ENCODE measurements at regions of chr20 and their contacts with region 1.

Region 1: GRCh38 chr20:4082406-4083097 is 67.2 kb upstream of the RNF24 start:
- DNase-seq: peak; percentile 50
- H3K4me3 Mint-ChIP-seq: peak overlapping the region; percentile 78
- H3K27ac Mint-ChIP-seq: peak overlapping the region; percentile 92
- H3K4me1 Mint-ChIP-seq: peaks cover 56% of the 10 kb centered on the region
- H3K27me3 Mint-ChIP-seq: peaks cover 2% of the 10 kb centered on the region

Region 2: GRCh38 chr20:3753098-3753980 is 329.2 kb before region 1 on chr20:
- intact Hi-C with region 1: loop called (anchors 1 kb)
- DNase-seq: peak; percentile 51
- H3K4me3 Mint-ChIP-seq: no peak overlapping the region
- H3K27ac Mint-ChIP-seq: no peak overlapping the region
- H3K4me1 Mint-ChIP-seq: peaks cover 7% of the 10 kb centered on the region
- H3K27me3 Mint-ChIP-seq: no peaks in the 10 kb centered on the region

Region 3: GRCh38 chr20:3888622-3889488 is 193.7 kb before region 1 on chr20 and contains the start of gene PANK2:
- intact Hi-C with region 1: loop called (anchors 1 kb)
- DNase-seq: peak; percentile 98
- H3K4me3 Mint-ChIP-seq: peak within 1 kb of the TSS; percentile 100
- H3K27ac Mint-ChIP-seq: peak within 1 kb of the TSS; percentile 98
- H3K4me1 Mint-ChIP-seq: peaks cover 44% of the 10 kb centered on the region
- H3K27me3 Mint-ChIP-seq: no peaks in the 10 kb centered on the region
- total RNA-seq, gene PANK2: 51.4 and 54.6 TPM in 2 replicates

Region 4: DNA sequence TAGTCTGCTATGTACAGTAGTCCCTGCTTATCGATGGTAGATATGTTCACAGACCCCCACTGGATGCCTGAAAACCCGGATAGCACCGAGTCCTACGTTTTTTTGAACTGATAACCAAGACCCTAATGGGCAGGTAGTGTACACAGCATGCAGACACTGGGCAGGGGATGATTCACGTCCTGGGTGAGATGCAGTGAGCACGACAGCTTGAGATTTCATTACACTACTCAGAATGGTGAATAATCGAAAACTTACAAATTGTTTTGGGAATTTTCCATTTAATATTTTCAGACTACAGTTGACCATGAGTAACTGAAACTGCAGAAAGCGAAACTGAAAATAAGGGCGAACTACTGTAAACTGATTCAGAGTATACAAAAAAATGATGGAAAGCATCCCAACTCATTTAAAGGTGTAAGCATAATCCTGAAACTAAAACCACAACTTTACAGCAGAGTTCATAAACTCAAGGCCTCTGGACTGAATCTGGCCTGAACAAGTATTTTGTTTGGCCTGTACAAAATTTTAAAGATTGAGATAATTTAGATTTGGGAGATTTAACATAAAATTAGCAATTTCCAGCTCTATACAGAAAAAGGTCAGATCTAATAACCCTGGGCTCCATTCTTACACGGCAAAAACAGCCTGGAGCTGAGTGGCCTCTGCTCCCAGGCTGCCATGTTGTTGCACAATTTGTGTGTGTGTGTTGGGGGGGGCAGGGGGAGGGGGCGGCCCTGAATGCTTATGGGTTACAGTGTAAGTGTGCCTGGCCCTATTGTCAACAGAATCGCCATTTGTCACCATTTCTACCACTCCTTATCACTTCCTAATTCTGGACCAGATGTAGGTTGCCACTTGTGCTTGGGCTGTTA is 102.1 kb before region 1 on chr20:
- intact Hi-C with region 1: loop called (anchors 1 kb)
- DNase-seq: no peak
- H3K4me3 Mint-ChIP-seq: peak overlapping the region; percentile 78
- H3K27ac Mint-ChIP-seq: peak overlapping the region; percentile 91
- H3K4me1 Mint-ChIP-seq: peaks cover 22% of the 10 kb centered on the region
- H3K27me3 Mint-ChIP-seq: no peaks in the 10 kb centered on the region

Region 5: GRCh38 chr20:4014031-4014474 is 68.5 kb before region 1 on chr20:
- intact Hi-C with region 1: loop called (anchors 1 kb)
- DNase-seq: no peak
- H3K4me3 Mint-ChIP-seq: peak overlapping the region; percentile 87
- H3K27ac Mint-ChIP-seq: peak overlapping the region; percentile 78
- H3K4me1 Mint-ChIP-seq: peaks cover 57% of the 10 kb centered on the region
- H3K27me3 Mint-ChIP-seq: peaks cover 4% of the 10 kb centered on the region

Region 6: DNA sequence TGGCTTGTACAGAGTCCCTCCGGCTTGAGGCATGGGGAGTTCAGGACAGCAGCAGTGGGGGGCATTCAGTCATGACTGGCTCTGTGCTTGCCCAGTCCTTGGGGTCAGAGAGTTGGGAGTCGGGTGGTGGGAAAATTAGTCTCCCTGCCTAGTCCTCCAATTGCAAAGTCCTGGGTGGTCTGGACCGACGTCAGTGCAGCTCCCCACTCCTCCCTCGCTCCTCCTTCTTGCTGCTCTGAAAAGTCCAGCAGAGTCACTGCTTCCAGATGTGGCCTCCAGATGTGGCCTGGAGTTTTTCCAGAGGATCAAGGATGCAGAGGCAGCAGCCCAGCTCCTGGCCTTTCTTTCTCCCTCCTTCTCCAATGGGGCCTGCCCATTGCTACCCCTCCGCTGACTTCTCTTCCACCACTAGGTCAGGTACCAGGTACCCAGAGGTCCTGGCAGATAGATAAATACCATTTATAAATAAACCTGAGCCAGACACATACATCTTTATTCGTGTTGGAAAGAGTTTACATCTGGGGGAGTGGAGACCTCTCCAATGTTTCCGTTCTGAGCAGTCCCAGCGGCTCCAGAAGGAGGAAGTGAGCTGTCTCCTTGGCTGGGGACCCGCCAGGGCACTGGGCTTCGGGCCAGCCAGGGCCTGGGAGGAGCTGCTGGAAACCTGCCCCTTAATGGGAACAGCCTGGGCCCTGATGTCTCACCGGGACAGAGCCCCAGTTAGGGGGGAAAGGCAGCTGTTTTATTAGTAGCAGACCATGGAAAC is 18.2 kb before region 1 on chr20:
- intact Hi-C with region 1: no loop called
- DNase-seq: no peak
- H3K4me3 Mint-ChIP-seq: no peak overlapping the region
- H3K27ac Mint-ChIP-seq: no peak overlapping the region
- H3K4me1 Mint-ChIP-seq: peaks cover 62% of the 10 kb centered on the region
- H3K27me3 Mint-ChIP-seq: peaks cover 1% of the 10 kb centered on the region

Region 7: GRCh38 chr20:4108495-4109306 is 26.1 kb after region 1 on chr20:
- intact Hi-C with region 1: no loop called
- DNase-seq: peak; percentile 62
- H3K4me3 Mint-ChIP-seq: no peak overlapping the region
- H3K27ac Mint-ChIP-seq: peak overlapping the region; percentile 19
- H3K4me1 Mint-ChIP-seq: peaks cover 39% of the 10 kb centered on the region
- H3K27me3 Mint-ChIP-seq: no peaks in the 10 kb centered on the region

Region 8: GRCh38 chr20:4119854-4120209 is 37.3 kb after region 1 on chr20:
- intact Hi-C with region 1: no loop called
- DNase-seq: no peak
- H3K4me3 Mint-ChIP-seq: no peak overlapping the region
- H3K27ac Mint-ChIP-seq: no peak overlapping the region
- H3K4me1 Mint-ChIP-seq: peaks cover 22% of the 10 kb centered on the region
- H3K27me3 Mint-ChIP-seq: peaks cover 37% of the 10 kb centered on the region

Region 9: GRCh38 chr20:4130404-4131189 is 48.0 kb after region 1 on chr20:
- intact Hi-C with region 1: loop called (anchors 2 kb)
- DNase-seq: peak; percentile 65
- H3K4me3 Mint-ChIP-seq: peak overlapping the region; percentile 60
- H3K27ac Mint-ChIP-seq: peak overlapping the region; percentile 91
- H3K4me1 Mint-ChIP-seq: peaks cover 57% of the 10 kb centered on the region
- H3K27me3 Mint-ChIP-seq: peaks cover 4% of the 10 kb centered on the region